PC-3 (cell line): ENCODE measurements at regions of chr14 and their contacts with region 1.

Region 1: DNA sequence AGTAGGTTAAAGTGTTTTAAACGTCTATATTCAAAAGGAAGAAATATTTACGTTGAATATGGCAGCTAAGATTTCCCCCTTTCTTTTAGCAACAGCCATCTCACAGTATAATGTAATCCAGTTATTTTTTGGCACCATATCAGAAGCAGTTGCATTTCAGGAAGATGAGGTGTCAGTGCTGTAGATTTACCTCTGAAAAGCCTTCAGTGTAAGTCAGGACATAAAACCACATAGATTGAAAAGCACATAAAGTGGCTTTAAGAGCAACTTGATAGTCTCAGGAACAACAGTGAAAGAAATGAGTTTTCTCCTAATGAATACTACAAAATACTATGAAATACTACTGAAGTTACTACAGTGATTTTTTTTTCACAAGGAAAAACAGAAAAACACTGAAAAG is 6.9 kb downstream of the MLH3 start:
- DNase-seq: peak; percentile 74
- ATAC-seq: peak; percentile 74
- H3K4me3 ChIP-seq: no peak overlapping the region
- H3K27ac ChIP-seq: no peak overlapping the region
- H3K4me1 ChIP-seq: peaks cover 35% of the 10 kb centered on the region
- H3K27me3 ChIP-seq: no peaks in the 10 kb centered on the region
- CTCF ChIP-seq: no peak

Region 2: GRCh38 chr14:74860906-74861733 is 183.2 kb before region 1 on chr14:
- CTCF ChIA-PET with region 1: no interaction called
- POLR2A ChIA-PET with region 1: no interaction called
- intact Hi-C with region 1: no loop called
- DNase-seq: peak; percentile 92
- ATAC-seq: peak; percentile 80
- H3K4me3 ChIP-seq: no peak overlapping the region
- H3K27ac ChIP-seq: no peak overlapping the region
- H3K4me1 ChIP-seq: no peaks in the 10 kb centered on the region
- H3K27me3 ChIP-seq: no peaks in the 10 kb centered on the region
- CTCF ChIP-seq: peak; percentile 90

Region 3: GRCh38 chr14:74922739-74923401 is 121.5 kb before region 1 on chr14 and contains the start of gene RPS6KL1:
- CTCF ChIA-PET with region 1: no interaction called
- POLR2A ChIA-PET with region 1: no interaction called
- intact Hi-C with region 1: no loop called
- DNase-seq: peak; percentile 89
- ATAC-seq: peak; percentile 96
- H3K4me3 ChIP-seq: peak within 1 kb of the TSS; percentile 82
- H3K27ac ChIP-seq: no peak within 1 kb of the TSS
- H3K4me1 ChIP-seq: peaks cover 15% of the 10 kb centered on the region; the same call in 1 of the 2 replicates
- H3K27me3 ChIP-seq: no peaks in the 10 kb centered on the region
- CTCF ChIP-seq: no peak
- total RNA-seq, gene RPS6KL1: 16.0 and 17.9 TPM in 2 replicates

Region 4: DNA sequence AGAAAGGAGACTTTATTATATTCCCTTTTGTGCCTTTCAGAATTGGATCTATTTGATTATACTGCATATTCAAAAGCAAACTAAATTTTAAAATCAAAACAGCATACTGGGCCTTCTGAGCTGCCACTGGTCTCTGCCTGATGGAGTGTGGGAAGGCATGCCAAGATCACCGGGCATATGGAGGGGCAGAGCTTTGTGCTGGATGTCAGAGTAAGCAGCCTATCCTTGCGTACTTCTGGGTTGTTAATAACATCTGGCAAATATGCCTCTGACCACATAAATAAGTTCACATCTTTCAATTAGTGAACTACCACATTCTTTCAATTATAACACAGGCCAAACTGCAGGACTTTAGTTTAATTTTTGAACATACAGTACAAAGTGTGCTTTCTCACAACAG is 11.4 kb before region 1 on chr14:
- CTCF ChIA-PET with region 1: no interaction called
- POLR2A ChIA-PET with region 1: no interaction called
- intact Hi-C with region 1: loop called (anchors 1 kb)
- DNase-seq: no peak
- ATAC-seq: no peak
- H3K4me3 ChIP-seq: no peak overlapping the region
- H3K27ac ChIP-seq: no peak overlapping the region
- H3K4me1 ChIP-seq: no peaks in the 10 kb centered on the region
- H3K27me3 ChIP-seq: no peaks in the 10 kb centered on the region
- CTCF ChIP-seq: no peak